H1 (cell line): ENCODE measurements at regions of chr17 and their contacts with region 1.

Region 1: DNA sequence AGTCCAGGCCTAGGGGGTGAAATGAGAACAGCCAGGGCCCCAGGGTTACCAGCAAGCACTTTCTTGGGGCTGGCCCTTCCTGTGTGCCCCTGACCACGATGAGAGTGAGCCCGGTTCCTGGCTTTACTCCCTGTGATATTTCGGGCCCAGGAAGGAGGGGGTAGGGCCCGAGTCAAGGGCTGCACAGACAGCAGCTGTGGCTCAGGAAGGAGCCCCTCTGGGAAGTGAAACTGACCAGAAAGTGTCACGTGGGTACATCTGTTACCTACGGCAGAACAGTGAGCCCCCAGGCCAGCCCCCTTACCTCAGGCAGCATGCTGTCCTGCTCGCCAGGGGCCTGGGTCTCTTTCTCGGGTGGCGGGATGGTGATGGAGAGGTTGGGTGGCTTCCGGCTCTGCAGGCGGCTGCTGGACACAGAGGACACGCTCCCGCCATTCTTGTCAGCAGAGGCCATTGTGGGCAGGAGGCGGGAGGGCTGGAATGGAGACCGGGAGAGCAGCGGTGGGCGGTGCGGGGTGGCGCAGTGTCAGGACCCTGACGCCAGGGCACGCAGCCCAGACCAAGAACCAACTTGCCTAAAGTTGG is 13.8 kb downstream of the AANAT start:
- DNase-seq: no peak
- H3K4me3 ChIP-seq: no peak overlapping the region
- H3K27ac ChIP-seq: no peak overlapping the region
- H3K4me1 ChIP-seq: no peaks in the 10 kb centered on the region
- H3K27me3 ChIP-seq: no peaks in the 10 kb centered on the region
- CTCF ChIP-seq: no peak
- EP300 ChIP-seq: no peak
- POLR2A ChIP-seq: no peak
- RAD21 ChIP-seq: no peak

Region 2: DNA sequence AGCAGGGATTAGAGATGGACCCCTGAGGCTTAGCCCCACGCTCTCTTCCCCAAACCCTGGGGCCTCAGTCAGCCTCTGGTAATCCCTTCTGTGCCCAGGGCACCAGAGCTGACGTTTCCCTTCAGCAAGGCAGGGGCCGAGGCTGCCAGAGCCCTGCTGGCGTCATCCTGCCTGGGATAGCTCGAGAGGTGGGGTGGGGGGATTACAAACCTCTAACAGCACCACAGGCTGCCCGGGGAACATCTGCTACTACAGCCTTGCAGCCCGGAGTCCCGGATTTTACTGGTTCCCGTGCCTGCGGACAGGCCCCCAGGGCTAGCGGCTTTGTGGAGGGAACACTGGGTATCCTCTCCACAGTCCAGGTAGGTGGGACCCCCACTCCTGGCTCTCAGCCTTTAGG is 13.8 kb before region 1 on chr17 and contains the start of gene AANAT:
- CTCF ChIA-PET with region 1: interaction called, 36 read pairs
- POLR2A ChIA-PET with region 1: interaction called, 11 read pairs
- DNase-seq: peak in 1 of 2 experiments; percentile 47
- H3K4me3 ChIP-seq: no peak within 1 kb of the TSS
- H3K27ac ChIP-seq: no peak within 1 kb of the TSS
- H3K4me1 ChIP-seq: peaks cover 0 to 9% (median 0%) of the 10 kb centered on the region in 4 experiments; a peak in 2 of 7 replicates
- H3K27me3 ChIP-seq: no peaks in the 10 kb centered on the region
- CTCF ChIP-seq: no peak
- EP300 ChIP-seq: no peak
- POLR2A ChIP-seq: no peak
- RAD21 ChIP-seq: no peak
- total RNA-seq, gene AANAT: not detected in 2 replicates

Region 3: GRCh38 chr17:76501018-76501826 is 20.1 kb after region 1 on chr17 and contains the start of gene RHBDF2:
- CTCF ChIA-PET with region 1: interaction called, 192 read pairs
- POLR2A ChIA-PET with region 1: interaction called, 4 read pairs
- DNase-seq: peak; percentile 65 to 100
- H3K4me3 ChIP-seq: peak within 1 kb of the TSS; percentile 62 to 82 (median 76)
- H3K27ac ChIP-seq: no peak within 1 kb of the TSS
- H3K4me1 ChIP-seq: peaks cover 11 to 43% (median 34%) of the 10 kb centered on the region in 4 experiments
- H3K27me3 ChIP-seq: no peaks in the 10 kb centered on the region
- CTCF ChIP-seq: no peak
- EP300 ChIP-seq: no peak
- POLR2A ChIP-seq: peak in 1 of 2 experiments; percentile 71; a peak in 2 of 3 replicates
- RAD21 ChIP-seq: no peak
- total RNA-seq, gene RHBDF2: 25.9 and 26.2 TPM in 2 replicates